Posterior vena cava (tissue), 2 donors: ENCODE measurements at regions of chr2 and their contacts with region 1.

Region 1: GRCh38 chr2:237674731-237675276 is 47.4 kb downstream of the LRRFIP1 start:
- DNase-seq: peak; percentile 97

Region 2: GRCh38 chr2:236984046-236984445 is 690.8 kb before region 1 on chr2:
- intact Hi-C with region 1: loop called in 1 of 2 experiments (anchors 5 kb)
- DNase-seq: no peak